ENCODE measurements at regions of chr10 and their contacts with region 1.

Region 1: DNA sequence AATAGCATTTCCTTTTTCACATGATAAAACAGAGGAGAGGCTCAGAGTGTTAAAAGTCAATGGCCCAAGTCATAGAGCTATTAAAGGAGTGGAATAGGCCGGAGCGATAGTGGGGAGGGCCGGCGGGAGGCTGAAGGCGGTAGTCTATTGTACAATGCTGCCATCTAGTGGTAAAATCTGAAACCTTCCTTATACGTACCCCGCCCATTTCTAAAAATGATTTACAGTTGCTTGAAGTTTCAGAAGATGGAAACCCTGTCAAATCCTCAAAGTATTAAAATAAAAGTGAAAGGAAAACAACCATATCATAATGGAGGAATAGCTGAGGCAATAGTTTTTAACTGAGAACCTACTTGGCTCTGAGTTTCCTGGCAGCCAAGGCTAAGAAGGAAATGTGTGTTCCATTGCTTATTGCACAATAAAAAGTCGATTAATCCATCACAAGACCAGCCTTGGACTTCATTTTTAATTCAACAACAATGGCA is 209.1 kb downstream of the CCSER2 start:
- DNase-seq: peak; percentile 49
- ATAC-seq: peak; percentile 62
- H3K4me3 ChIP-seq: peak overlapping the region in 2 of 3 experiments; percentile 9 to 44; a peak in 2 of 6 replicates
- H3K27ac ChIP-seq: peak overlapping the region; percentile 24
- H3K4me1 ChIP-seq: peaks cover 51% of the 10 kb centered on the region
- H3K27me3 ChIP-seq: peaks cover 0 to 5% of the 10 kb centered on the region in 2 experiments; a peak in 1 of 5 replicates
- CTCF ChIP-seq: peak; percentile 84
- EP300 ChIP-seq: no peak
- POLR2A ChIP-seq: no peak
- RAD21 ChIP-seq: peak; percentile 80

Region 2: GRCh38 chr10:84264611-84265141 is 272.8 kb before region 1 on chr10:
- CTCF ChIA-PET with region 1: interaction called, 10 read pairs
- POLR2A ChIA-PET with region 1: no interaction called
- in situ Hi-C with region 1: loop called (anchors 5 kb)
- intact Hi-C with region 1: loop called (anchors 1 kb)
- DNase-seq: peak; percentile 41
- ATAC-seq: peak; percentile 97
- H3K4me3 ChIP-seq: no peak overlapping the region
- H3K27ac ChIP-seq: no peak overlapping the region
- H3K4me1 ChIP-seq: peaks cover 5% of the 10 kb centered on the region; the same call in 1 of the 2 replicates
- H3K27me3 ChIP-seq: peaks cover 3 to 24% of the 10 kb centered on the region in 2 experiments; a peak in 3 of 5 replicates
- CTCF ChIP-seq: peak; percentile 97
- EP300 ChIP-seq: no peak
- POLR2A ChIP-seq: no peak
- RAD21 ChIP-seq: peak; percentile 78

Region 3: GRCh38 chr10:84375011-84375410 is 162.5 kb before region 1 on chr10:
- CTCF ChIA-PET with region 1: interaction called, 77 read pairs
- POLR2A ChIA-PET with region 1: no interaction called
- in situ Hi-C with region 1: no loop called
- intact Hi-C with region 1: loop called (anchors 1 kb)
- DNase-seq: peak; percentile 51
- ATAC-seq: peak; percentile 53; the same call in 2 of the 3 replicates
- H3K4me3 ChIP-seq: no peak overlapping the region
- H3K27ac ChIP-seq: no peak overlapping the region
- H3K4me1 ChIP-seq: no peaks in the 10 kb centered on the region
- H3K27me3 ChIP-seq: no peaks in the 10 kb centered on the region
- CTCF ChIP-seq: peak; percentile 82
- EP300 ChIP-seq: no peak
- POLR2A ChIP-seq: no peak
- RAD21 ChIP-seq: peak; percentile 55

Region 4: DNA sequence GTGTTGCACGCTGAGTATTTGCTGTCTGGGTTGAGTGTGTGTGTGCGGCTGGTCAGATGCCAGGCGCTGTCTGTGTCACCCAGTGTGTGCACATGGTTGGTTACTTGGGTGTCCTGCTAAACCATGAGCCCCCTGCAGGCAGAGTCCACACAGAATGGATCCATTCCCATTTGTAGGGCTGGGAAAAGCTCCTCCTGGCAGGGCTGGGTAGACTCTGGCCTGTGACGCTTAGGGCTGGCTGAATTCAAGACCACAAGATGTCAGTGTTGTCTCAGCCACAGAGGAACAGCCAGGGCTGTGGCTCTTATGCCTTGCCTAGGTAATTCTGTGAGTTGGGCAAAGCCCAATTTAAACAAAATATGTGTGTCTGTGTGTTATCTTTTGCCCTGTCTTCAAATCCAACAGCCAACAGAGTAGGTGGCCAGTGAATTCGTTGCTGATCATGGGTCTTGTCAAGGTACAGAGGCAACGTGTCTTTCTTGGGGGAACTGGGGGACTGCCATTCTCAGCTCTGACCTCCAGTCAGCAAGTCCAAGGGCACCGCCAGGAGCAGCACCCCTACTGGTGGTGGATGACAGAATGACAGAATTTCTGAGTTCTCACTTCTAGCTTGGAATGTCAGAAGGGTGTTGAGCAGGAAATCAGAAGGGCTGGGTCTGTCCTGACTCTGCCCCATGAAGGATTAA is 76.0 kb after region 1 on chr10:
- CTCF ChIA-PET with region 1: interaction called, 7 read pairs
- POLR2A ChIA-PET with region 1: no interaction called
- in situ Hi-C with region 1: no loop called
- intact Hi-C with region 1: loop called (anchors 1 kb)
- DNase-seq: peak; percentile 77
- ATAC-seq: peak; percentile 100
- H3K4me3 ChIP-seq: no peak overlapping the region
- H3K27ac ChIP-seq: no peak overlapping the region
- H3K4me1 ChIP-seq: no peaks in the 10 kb centered on the region
- H3K27me3 ChIP-seq: no peaks in the 10 kb centered on the region
- CTCF ChIP-seq: peak; percentile 87
- EP300 ChIP-seq: no peak
- POLR2A ChIP-seq: no peak
- RAD21 ChIP-seq: peak; percentile 83

Region 5: DNA sequence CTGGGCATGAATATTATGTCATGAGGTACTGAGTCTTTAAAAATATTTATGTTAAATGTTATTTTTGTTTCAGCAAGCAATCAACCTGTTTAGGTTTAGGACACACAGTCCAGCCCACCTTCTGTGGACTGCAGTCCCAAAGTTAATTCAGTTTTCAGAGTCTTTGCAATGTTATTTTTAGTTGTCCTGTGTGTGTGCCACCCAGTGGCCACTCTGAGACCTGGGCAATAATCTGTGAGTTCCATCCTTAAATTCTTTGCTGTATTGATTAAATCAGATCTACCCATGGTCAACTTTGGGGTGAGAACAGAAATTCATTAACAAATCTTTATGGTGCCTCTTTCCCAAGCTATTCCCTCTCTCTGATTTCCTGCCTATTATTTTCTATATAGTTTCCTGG is 206.0 kb after region 1 on chr10:
- CTCF ChIA-PET with region 1: interaction called, 7 read pairs
- POLR2A ChIA-PET with region 1: no interaction called
- in situ Hi-C with region 1: no loop called
- intact Hi-C with region 1: loop called (anchors 1 kb)
- DNase-seq: peak; percentile 7
- ATAC-seq: peak; percentile 62
- H3K4me3 ChIP-seq: no peak overlapping the region
- H3K27ac ChIP-seq: no peak overlapping the region
- H3K4me1 ChIP-seq: no peaks in the 10 kb centered on the region
- H3K27me3 ChIP-seq: no peaks in the 10 kb centered on the region
- CTCF ChIP-seq: peak; percentile 53
- EP300 ChIP-seq: no peak
- POLR2A ChIP-seq: no peak
- RAD21 ChIP-seq: no peak; the same call in 1 of the 2 replicates

Measured in HepG2 (cell line).